K562 (cell line): ENCODE measurements at regions of chr1 and their contacts with region 1.

Region 1: GRCh38 chr1:28329395-28330153 is 734 bp downstream of the MED18 start:
- DNase-seq: peak in 2 of 4 experiments; percentile 27 to 70
- ATAC-seq: peak; percentile 74
- H3K4me3 ChIP-seq: peak overlapping the region; percentile 72
- H3K27ac ChIP-seq: peak overlapping the region; percentile 84
- H3K4me1 ChIP-seq: peaks cover 17 to 33% of the 10 kb centered on the region in 2 experiments
- H3K27me3 ChIP-seq: no peaks in the 10 kb centered on the region
- CTCF ChIP-seq: no peak
- EP300 ChIP-seq: no peak
- POLR2A ChIP-seq: no peak
- RAD21 ChIP-seq: peak in 1 of 2 experiments; percentile 7; a peak in 1 of 4 replicates

Region 2: DNA sequence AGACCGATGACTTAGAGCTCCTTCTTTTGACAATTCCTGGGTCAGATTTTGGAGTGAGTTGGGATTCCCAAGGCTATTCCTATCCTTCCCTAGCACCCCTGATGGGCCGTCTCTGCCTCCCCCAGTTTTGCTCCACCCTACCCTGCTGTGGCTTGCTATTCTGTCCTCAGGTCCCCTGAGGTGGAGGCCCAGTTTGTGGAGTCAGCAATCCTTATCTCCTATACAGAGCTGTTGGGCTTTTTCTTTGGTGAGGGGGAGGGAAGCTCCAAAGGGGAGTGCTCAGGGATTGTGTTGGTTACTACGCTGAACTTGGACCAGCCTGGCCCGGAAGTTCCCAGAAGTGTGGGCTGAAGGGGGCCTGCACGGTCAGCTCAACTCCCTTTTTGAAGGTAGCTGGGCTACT is 62.7 kb before region 1 on chr1:
- CTCF ChIA-PET with region 1: no interaction called
- POLR2A ChIA-PET with region 1: interaction called, 25 read pairs
- in situ Hi-C with region 1: no loop called
- intact Hi-C with region 1: loop called (anchors 5 kb)
- DNase-seq: peak; percentile 76 to 94 (median 81)
- ATAC-seq: peak; percentile 85
- H3K4me3 ChIP-seq: no peak overlapping the region
- H3K27ac ChIP-seq: peak overlapping the region; percentile 71
- H3K4me1 ChIP-seq: peaks cover 44 to 56% of the 10 kb centered on the region in 2 experiments
- H3K27me3 ChIP-seq: no peaks in the 10 kb centered on the region
- CTCF ChIP-seq: no peak
- EP300 ChIP-seq: peak; percentile 86; the same call in 1 of the 2 replicates
- POLR2A ChIP-seq: no peak
- RAD21 ChIP-seq: no peak; a peak in 1 of 4 replicates

Region 3: GRCh38 chr1:28313710-28314546 is 15.6 kb before region 1 on chr1:
- CTCF ChIA-PET with region 1: no interaction called
- POLR2A ChIA-PET with region 1: interaction called, 102 read pairs
- in situ Hi-C with region 1: no loop called
- intact Hi-C with region 1: no loop called
- DNase-seq: peak in 3 of 4 experiments; percentile 42 to 72 (median 63)
- ATAC-seq: peak; percentile 96
- H3K4me3 ChIP-seq: no peak overlapping the region
- H3K27ac ChIP-seq: peak overlapping the region; percentile 20; the same call in 1 of the 3 replicates
- H3K4me1 ChIP-seq: peaks cover 10 to 11% of the 10 kb centered on the region in 2 experiments; a peak in 4 of 5 replicates
- H3K27me3 ChIP-seq: no peaks in the 10 kb centered on the region
- CTCF ChIP-seq: no peak
- EP300 ChIP-seq: no peak
- POLR2A ChIP-seq: no peak
- RAD21 ChIP-seq: no peak

Region 4: DNA sequence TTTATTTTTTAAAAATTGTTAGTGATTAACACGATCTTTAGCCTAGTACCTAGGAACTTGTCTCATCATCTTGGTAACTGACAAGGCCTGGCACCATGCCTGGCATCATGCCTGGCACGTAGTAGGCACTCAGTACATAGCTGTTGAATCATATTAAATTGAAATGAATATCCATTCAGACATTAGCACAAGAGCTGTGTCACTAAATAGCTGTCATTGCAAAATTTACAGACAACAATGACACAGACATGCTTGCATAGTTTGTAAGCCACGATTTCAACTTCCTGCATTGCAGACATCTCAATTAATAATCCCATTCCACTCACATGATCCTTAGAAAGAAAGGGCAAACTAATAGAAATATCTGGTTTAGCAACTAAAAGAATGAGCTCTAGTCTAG is 24.5 kb after region 1 on chr1:
- CTCF ChIA-PET with region 1: interaction called, 3 read pairs
- POLR2A ChIA-PET with region 1: interaction called, 8 read pairs
- in situ Hi-C with region 1: no loop called
- intact Hi-C with region 1: loop called (anchors 2 kb)
- DNase-seq: no peak
- ATAC-seq: no peak
- H3K4me3 ChIP-seq: no peak overlapping the region
- H3K27ac ChIP-seq: no peak overlapping the region
- H3K4me1 ChIP-seq: peaks cover 21 to 34% of the 10 kb centered on the region in 2 experiments
- H3K27me3 ChIP-seq: no peaks in the 10 kb centered on the region
- CTCF ChIP-seq: no peak
- EP300 ChIP-seq: no peak
- POLR2A ChIP-seq: no peak
- RAD21 ChIP-seq: no peak